ENCODE measurements at regions of chr20 and their contacts with region 1.

Region 1: DNA sequence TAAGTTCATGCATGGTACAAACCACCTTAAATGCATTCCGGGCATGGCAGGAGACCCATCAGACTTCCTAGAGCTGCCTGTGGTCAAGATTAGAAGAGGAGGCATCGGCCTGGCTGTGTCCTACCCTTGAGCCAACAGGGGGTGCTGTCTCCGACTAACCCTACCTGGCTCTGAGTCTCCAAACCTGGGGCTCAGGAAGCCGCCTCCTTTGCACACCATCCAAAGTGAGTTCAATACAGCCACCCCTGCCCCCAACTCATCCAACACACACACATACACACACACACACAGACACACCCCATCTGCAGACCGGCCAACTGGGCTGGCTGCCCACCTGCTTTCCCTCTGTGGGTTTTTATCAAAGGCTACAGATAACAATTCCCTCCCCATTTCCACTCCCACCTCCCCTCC is 77.0 kb downstream of the JPH2 start:
- DNase-seq: no peak
- H3K4me3 ChIP-seq: no peak overlapping the region
- H3K27ac ChIP-seq: no peak overlapping the region
- H3K4me1 ChIP-seq: no peaks in the 10 kb centered on the region
- H3K27me3 ChIP-seq: no peaks in the 10 kb centered on the region

Region 2: DNA sequence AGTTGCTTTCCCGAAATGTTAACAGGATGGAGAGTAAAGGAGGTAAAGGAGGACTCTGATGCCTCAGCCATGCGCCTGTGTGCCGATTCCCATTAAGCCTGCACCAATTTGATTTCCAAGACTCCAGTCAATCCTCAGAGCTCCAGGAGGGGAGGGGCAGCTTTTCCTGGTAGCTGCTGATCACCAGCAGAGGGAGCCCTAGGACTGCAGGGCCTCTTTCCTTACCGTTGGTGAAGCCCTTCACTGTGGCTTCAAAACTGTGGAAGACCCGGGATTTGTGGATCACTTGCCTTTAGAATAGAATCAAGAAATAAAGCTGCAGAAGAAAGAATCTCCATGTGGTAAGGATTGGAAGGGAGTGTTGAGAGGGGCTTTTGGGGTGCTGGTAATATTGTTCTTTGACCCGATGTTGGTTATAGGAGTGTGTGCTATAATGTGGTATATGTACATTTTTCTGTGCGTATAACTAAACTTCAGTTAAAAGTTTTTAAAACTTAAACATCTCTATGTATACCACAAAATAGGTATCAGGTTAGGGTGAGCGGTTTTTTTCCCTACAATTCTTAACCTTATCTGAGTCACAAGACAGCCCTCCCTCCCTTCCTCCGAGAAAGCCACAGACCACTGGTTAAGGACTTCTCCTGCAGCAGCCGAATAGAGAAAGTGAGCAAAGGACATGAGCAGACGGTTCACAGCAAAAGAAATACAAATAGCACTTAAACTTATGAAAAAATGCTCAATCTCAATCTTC is 107.6 kb after region 1 on chr20:
- in situ Hi-C with region 1: no loop called
- DNase-seq: peak; percentile 80
- H3K4me3 ChIP-seq: no peak overlapping the region
- H3K27ac ChIP-seq: no peak overlapping the region
- H3K4me1 ChIP-seq: no peaks in the 10 kb centered on the region
- H3K27me3 ChIP-seq: no peaks in the 10 kb centered on the region

Region 3: GRCh38 chr20:44310664-44311639 is 201.0 kb after region 1 on chr20 and contains the start of gene FITM2:
- in situ Hi-C with region 1: loop called (anchors 10 kb)
- DNase-seq: peak; percentile 97
- H3K4me3 ChIP-seq: peak within 1 kb of the TSS; percentile 81
- H3K27ac ChIP-seq: peak within 1 kb of the TSS; percentile 31
- H3K4me1 ChIP-seq: 0 out of 2 replicates have a peak, but pooled peaks cover 4% of the 10 kb centered on the region
- H3K27me3 ChIP-seq: no peaks in the 10 kb centered on the region
- total RNA-seq, gene FITM2: 8.9 and 9.9 TPM in 2 replicates

Region 4: DNA sequence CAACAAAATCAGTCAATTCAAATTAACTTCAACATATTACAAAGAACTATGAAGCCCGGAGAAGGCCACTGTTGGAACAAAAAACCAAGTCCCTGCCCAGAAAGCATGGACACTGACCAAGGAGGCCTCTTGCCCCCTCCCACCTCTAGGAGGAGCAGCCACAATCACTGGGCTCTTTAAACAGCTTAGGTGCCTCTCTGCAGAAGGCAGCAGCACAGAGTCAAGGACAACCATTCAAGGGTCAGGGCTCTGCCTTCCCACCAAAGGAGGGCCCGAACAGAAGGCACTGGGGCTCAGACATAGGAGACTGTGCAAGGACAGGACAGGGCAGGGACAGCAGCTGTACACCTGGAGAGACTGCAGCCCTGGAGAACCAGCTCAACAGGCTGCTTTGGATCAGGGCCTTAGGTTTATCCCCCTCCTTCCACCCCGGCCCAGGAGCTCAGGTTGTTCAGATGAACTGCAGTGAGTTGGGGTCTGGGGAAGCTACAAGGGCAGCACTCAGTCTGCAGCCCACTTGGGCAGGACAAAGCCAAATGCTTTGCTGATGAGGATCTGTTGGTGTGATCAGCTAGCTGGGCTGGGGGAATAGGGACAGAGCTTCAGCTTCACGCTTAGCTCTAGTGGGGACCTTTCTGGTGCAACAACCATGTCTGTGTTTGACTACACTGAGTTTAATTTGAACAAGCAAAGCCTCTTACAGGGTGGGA is 832.5 kb after region 1 on chr20:
- in situ Hi-C with region 1: no loop called
- DNase-seq: no peak
- H3K4me3 ChIP-seq: no peak overlapping the region
- H3K27ac ChIP-seq: no peak overlapping the region
- H3K4me1 ChIP-seq: peaks cover 5% of the 10 kb centered on the region; the same call in 1 of the 2 replicates
- H3K27me3 ChIP-seq: no peaks in the 10 kb centered on the region

Measured in GM23248 (cell line).